CD8-positive, alpha-beta T cell (primary cell): ENCODE measurements at regions of chr3 and their contacts with region 1.

Region 1: GRCh38 chr3:182909318-182910040 is 70.9 kb downstream of the DCUN1D1 start:
- DNase-seq: peak in 2 of 9 experiments; percentile 28 to 49
- ATAC-seq: peak; percentile 41
- H3K4me3 ChIP-seq: no peak overlapping the region
- H3K4me3 Mint-ChIP-seq: no peak overlapping the region
- H3K27ac ChIP-seq: no peak overlapping the region
- H3K27ac Mint-ChIP-seq: no peak overlapping the region
- H3K4me1 ChIP-seq: peaks cover 20% of the 10 kb centered on the region
- H3K4me1 Mint-ChIP-seq: peaks cover 43% of the 10 kb centered on the region
- H3K27me3 ChIP-seq: no peaks in the 10 kb centered on the region
- H3K27me3 Mint-ChIP-seq: no peaks in the 10 kb centered on the region
- CTCF ChIP-seq: peak; percentile 70

Region 2: GRCh38 chr3:182671942-182672341 is 237.5 kb before region 1 on chr3:
- CTCF ChIA-PET with region 1: no interaction called
- POLR2A ChIA-PET with region 1: no interaction called
- intact Hi-C with region 1: no loop called
- DNase-seq: no peak
- ATAC-seq: no peak
- H3K4me3 ChIP-seq: no peak overlapping the region
- H3K4me3 Mint-ChIP-seq: no peak overlapping the region
- H3K27ac ChIP-seq: no peak overlapping the region
- H3K27ac Mint-ChIP-seq: no peak overlapping the region
- H3K4me1 ChIP-seq: no peaks in the 10 kb centered on the region
- H3K4me1 Mint-ChIP-seq: no peaks in the 10 kb centered on the region
- H3K27me3 ChIP-seq: peaks cover 3% of the 10 kb centered on the region in 2 experiments
- H3K27me3 Mint-ChIP-seq: peaks cover 18% of the 10 kb centered on the region
- CTCF ChIP-seq: no peak

Region 3: GRCh38 chr3:182855076-182855475 is 54.4 kb before region 1 on chr3:
- CTCF ChIA-PET with region 1: no interaction called
- POLR2A ChIA-PET with region 1: no interaction called
- intact Hi-C with region 1: loop called in 1 of 2 experiments (anchors 10 kb)
- DNase-seq: no peak
- ATAC-seq: no peak
- H3K4me3 ChIP-seq: no peak overlapping the region
- H3K4me3 Mint-ChIP-seq: no peak overlapping the region
- H3K27ac ChIP-seq: peak overlapping the region in 1 of 2 experiments; percentile 11
- H3K27ac Mint-ChIP-seq: no peak overlapping the region
- H3K4me1 ChIP-seq: no peaks in the 10 kb centered on the region
- H3K4me1 Mint-ChIP-seq: no peaks in the 10 kb centered on the region
- H3K27me3 ChIP-seq: no peaks in the 10 kb centered on the region
- H3K27me3 Mint-ChIP-seq: no peaks in the 10 kb centered on the region
- CTCF ChIP-seq: no peak

Region 4: GRCh38 chr3:182957676-182958266 is 48.3 kb after region 1 on chr3:
- CTCF ChIA-PET with region 1: no interaction called
- POLR2A ChIA-PET with region 1: no interaction called
- intact Hi-C with region 1: no loop called
- DNase-seq: no peak
- ATAC-seq: no peak
- H3K4me3 ChIP-seq: no peak overlapping the region
- H3K4me3 Mint-ChIP-seq: no peak overlapping the region
- H3K27ac ChIP-seq: no peak overlapping the region
- H3K27ac Mint-ChIP-seq: no peak overlapping the region
- H3K4me1 ChIP-seq: no peaks in the 10 kb centered on the region
- H3K4me1 Mint-ChIP-seq: peaks cover 5% of the 10 kb centered on the region
- H3K27me3 ChIP-seq: no peaks in the 10 kb centered on the region
- H3K27me3 Mint-ChIP-seq: no peaks in the 10 kb centered on the region
- CTCF ChIP-seq: no peak

Region 5: DNA sequence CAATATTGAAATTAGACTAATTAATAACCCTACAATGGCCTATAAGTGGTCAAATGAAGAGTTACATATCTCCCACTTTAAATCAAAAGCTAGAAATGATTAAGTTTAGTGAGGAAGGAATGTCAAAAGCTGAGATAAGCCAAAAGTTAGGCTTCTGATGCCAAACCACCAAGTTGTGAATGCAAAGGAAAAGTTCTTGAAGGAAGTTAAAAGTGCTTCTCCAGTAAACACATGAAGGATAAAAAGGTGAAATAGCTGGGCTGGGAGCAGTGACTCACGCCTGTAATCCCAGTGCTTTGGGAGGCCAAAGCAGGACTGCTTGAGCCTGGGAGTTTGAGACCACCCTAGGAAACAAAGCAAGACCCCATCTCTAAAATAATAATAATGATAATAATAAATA is 117.8 kb after region 1 on chr3:
- CTCF ChIA-PET with region 1: no interaction called
- POLR2A ChIA-PET with region 1: no interaction called
- intact Hi-C with region 1: loop called in 1 of 2 experiments (anchors 5 kb)
- DNase-seq: no peak
- ATAC-seq: no peak
- H3K4me3 ChIP-seq: no peak overlapping the region
- H3K4me3 Mint-ChIP-seq: no peak overlapping the region
- H3K27ac ChIP-seq: no peak overlapping the region
- H3K27ac Mint-ChIP-seq: no peak overlapping the region
- H3K4me1 ChIP-seq: no peaks in the 10 kb centered on the region
- H3K4me1 Mint-ChIP-seq: no peaks in the 10 kb centered on the region
- H3K27me3 ChIP-seq: no peaks in the 10 kb centered on the region
- H3K27me3 Mint-ChIP-seq: no peaks in the 10 kb centered on the region
- CTCF ChIP-seq: no peak